ENCODE measurements at regions of chr7 and their contacts with region 1.

Region 1: DNA sequence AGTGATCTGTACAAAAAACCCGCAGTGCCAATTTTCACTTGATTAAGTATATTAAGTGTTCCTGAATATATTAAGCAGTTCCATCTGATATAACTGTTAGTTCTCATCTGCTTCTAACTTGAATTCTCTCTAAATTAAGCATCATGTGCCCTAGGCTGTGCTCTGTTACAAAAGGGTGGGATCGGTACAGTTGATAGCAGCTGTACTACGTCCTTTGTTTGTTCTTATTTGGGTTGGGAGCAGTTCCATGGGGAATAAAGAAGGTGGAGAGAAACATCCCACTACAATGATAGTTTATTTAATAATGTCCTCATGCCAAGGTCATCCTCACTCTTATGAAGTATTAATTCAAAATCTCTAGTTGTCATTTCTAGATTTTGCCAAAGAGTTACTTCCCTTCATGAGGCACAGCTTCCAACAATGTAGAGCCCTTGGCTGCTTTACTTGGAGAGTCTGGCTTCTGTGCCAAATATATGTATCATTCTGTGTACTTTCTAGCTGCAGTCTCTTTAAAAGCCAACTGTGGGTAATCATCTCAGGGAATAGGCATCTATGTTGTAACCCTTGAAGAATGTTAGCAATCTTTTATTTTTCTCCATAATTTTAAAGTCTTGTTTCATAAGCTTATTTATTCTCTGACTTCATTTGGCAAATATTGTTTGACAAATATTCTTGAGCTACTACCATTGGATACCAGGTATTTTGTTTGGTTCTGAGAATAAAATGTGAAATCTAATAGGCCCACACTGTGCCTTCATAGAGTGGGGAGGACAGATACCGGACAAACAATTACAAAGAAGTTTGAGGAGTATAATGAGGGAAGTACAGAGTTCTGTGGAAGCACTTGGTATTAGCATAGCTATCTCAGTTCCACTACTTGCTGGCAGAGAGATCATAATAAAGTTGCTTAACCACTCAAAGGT is 22.4 kb upstream of the AHR start:
- DNase-seq: no peak
- H3K4me3 Mint-ChIP-seq: peak overlapping the region; percentile 55
- H3K27ac Mint-ChIP-seq: peak overlapping the region; percentile 89
- H3K4me1 Mint-ChIP-seq: peaks cover 56% of the 10 kb centered on the region
- H3K27me3 Mint-ChIP-seq: no peaks in the 10 kb centered on the region
- CTCF ChIP-seq: no peak

Region 2: DNA sequence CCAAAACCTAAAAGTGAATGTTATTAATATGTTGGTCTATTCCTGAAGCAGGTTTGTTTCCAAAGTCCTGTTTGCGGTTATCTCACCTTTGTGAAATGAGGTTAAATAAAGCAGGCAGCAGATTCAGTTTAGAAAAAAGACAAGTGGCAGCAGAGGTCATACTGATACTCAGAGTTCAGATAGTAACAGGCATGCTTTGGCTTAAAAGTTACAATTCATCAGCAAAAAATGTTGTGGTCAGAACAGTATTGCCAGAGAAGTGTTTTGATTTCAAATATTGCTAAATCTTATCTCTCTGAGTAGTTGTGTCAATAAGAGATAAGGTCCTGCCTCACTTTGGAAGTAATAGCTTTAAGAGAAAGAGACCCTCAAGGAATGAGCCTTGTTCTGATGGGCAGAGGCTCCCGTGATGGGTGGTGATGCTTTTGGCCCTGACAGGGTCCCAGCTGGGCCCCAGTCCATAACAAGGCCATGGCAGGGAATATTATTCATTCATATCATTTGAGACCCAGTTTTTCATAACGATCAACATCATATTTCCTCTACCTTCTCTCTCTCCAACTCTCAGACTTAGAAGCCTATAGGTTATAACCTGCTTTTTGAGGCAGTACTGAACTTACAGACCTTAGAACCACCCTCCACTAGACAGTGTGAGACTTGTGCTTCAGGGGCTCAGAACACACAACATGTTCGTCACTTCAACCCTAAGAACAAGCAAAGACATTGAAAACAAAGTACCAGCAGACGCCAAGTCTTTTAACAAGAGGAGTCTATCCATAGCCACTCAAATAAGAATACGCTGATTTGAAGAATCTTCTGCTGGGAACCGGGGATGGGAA is 36.1 kb before region 1 on chr7:
- CTCF ChIA-PET with region 1: interaction called, 3 read pairs
- intact Hi-C with region 1: loop called (anchors 2 kb)
- DNase-seq: no peak
- H3K4me3 Mint-ChIP-seq: peak overlapping the region; percentile 4
- H3K27ac Mint-ChIP-seq: peak overlapping the region; percentile 19
- H3K4me1 Mint-ChIP-seq: peaks cover 57% of the 10 kb centered on the region
- H3K27me3 Mint-ChIP-seq: peaks cover 12% of the 10 kb centered on the region
- CTCF ChIP-seq: no peak

Region 3: GRCh38 chr7:17255926-17256325 is 20.1 kb before region 1 on chr7:
- CTCF ChIA-PET with region 1: interaction called, 8 read pairs
- intact Hi-C with region 1: loop called (anchors 1 kb)
- DNase-seq: no peak
- H3K4me3 Mint-ChIP-seq: no peak overlapping the region
- H3K27ac Mint-ChIP-seq: no peak overlapping the region
- H3K4me1 Mint-ChIP-seq: peaks cover 49% of the 10 kb centered on the region
- H3K27me3 Mint-ChIP-seq: no peaks in the 10 kb centered on the region
- CTCF ChIP-seq: no peak

Region 4: DNA sequence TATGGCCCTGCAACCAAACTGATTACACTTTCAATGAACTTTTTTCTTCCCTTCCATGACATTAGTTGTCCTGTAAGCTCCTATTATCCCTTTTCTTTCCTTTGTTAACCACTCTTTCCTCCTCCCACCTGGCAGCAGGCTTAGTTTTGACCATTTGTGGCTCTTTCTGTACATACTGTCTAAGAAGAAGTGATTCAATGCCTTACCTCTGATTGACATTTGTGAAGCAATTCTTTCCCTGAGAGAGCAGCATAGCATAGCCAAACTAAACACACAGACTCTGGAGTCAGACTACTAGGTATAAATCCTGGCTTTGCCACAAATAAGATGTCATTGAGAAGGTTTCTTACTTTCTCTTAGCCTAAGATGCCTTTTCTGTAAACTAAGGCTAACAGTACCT is 71.4 kb after region 1 on chr7:
- CTCF ChIA-PET with region 1: no interaction called
- intact Hi-C with region 1: no loop called
- DNase-seq: no peak
- H3K4me3 Mint-ChIP-seq: no peak overlapping the region
- H3K27ac Mint-ChIP-seq: peak overlapping the region; percentile 23
- H3K4me1 Mint-ChIP-seq: peaks cover 25% of the 10 kb centered on the region
- H3K27me3 Mint-ChIP-seq: no peaks in the 10 kb centered on the region
- CTCF ChIP-seq: no peak

Region 5: DNA sequence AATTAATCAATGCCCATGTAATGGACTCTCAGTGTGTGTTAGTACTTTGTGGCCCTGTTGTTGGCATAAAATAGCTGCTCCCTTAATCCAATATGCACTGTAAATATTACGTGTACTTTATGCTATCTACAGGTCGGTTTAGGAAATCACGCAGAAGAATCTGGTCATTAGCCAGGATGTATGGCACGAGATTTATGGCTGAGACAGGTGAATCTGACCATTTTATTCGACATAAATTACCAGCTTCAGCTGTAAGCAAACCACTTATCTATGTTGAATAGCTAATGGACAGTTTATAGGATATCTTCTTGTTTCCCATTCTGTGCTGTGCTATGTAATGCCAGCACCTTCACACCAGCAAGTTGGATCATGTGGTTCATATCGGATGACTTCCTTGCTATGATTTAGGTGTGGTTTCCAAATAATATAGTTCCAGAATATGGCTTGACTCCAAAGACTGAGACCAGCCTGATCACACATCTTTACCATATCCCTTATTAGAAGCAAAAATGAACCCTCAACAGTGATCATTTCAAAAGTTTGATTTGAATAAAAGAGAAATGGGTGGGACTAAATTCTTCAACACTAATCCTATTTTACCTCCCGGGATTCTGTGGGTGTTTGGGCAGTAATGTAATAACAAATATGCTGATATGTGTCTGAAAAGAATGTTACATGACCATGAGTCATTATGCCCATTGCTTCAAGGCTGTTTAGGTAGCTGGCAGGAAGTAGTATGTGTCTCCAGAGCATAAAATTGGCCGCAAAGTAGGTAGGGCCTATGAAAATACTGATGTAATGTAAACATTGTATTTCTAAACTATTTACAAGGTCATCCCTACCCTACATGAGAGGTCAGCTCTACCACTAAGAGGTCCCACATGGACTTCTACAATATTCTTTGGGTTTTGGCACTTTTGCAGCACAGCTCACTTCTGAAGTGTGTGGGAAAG is 324.0 kb after region 1 on chr7:
- CTCF ChIA-PET with region 1: no interaction called
- intact Hi-C with region 1: no loop called
- DNase-seq: peak; percentile 68
- H3K4me3 Mint-ChIP-seq: peak overlapping the region; percentile 22
- H3K27ac Mint-ChIP-seq: peak overlapping the region; percentile 96
- H3K4me1 Mint-ChIP-seq: peaks cover 73% of the 10 kb centered on the region
- H3K27me3 Mint-ChIP-seq: no peaks in the 10 kb centered on the region
- CTCF ChIP-seq: no peak

Measured in Calu3 (cell line).